Ascending aorta (tissue), 2 donors: ENCODE measurements at regions of chr7 and their contacts with region 1.

Region 1: GRCh38 chr7:143305423-143306070 is 10.4 kb upstream of the CLCN1 start:
- DNase-seq: no peak
- H3K4me3 ChIP-seq: no peak overlapping the region
- H3K27ac ChIP-seq: no peak overlapping the region
- H3K4me1 ChIP-seq: no peaks in the 10 kb centered on the region
- H3K27me3 ChIP-seq: no peaks in the 10 kb centered on the region
- CTCF ChIP-seq: peak; percentile 35 to 67 (median 60)

Region 2: DNA sequence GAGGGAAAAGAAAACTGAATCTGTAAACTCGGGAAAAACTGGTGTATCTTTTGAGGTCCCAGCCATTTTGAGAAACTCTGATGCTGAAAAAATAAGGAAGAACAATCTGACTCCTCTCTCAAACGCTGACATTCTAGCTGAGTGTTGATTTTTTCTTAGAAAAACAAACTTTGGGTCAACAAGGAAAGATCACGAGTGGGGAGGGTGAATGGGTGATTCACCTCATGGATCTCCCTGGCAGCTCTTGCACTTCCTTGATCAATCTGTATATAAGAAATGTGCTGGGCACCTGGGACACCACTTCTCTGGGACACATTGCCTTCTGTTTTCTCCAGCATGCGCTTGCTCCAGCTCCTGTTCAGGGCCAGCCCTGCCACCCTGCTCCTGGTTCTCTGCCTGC is 173.8 kb before region 1 on chr7 and contains the start of gene PIP:
- intact Hi-C with region 1: no loop called
- DNase-seq: no peak
- H3K4me3 ChIP-seq: no peak within 1 kb of the TSS
- H3K27ac ChIP-seq: no peak within 1 kb of the TSS
- H3K4me1 ChIP-seq: no peaks in the 10 kb centered on the region
- H3K27me3 ChIP-seq: no peaks in the 10 kb centered on the region
- CTCF ChIP-seq: no peak
- total RNA-seq, gene PIP: not detected

Region 3: DNA sequence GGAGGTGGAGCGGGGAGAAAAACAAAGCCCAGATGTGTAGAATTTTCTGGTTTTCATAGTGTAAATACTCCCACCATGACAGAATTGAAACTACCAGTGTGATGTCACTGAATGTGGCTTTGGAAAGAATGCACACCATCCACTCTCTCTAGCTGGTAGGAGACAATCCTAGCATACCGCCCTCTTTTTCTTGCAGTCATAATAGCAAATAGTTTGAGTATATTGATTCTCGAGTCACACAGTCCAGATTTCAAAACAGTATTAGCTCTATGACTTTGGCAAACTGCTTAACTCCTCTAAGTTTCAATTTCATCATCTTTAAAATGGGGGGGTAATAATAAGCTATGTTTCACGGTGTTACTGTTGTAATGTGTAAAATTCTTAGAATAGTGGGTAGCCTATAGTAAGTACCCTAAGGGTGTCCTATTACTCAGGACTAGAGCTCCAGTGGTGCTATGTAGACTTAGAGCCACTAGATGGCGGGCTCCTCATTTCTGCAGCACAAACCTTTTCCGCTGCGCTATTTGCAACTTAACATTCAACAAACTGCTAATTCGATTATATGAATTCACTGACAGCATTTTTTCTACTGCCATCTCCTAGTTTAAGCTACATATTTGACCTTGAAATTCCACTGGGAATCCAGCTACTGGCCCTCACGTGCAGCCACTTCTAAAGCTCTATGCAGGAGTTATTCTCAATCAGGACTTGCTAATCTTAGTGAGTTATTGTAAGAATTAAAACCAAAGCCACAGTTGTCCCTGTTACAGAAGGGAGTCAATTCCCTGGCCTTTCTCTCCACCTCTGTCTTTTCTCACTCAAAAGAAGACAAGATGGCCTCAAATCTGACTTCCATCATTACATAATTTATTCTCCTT is 65.0 kb before region 1 on chr7:
- intact Hi-C with region 1: loop called (anchors 2 kb)
- DNase-seq: peak in 1 of 2 donors; percentile 78
- H3K4me3 ChIP-seq: no peak overlapping the region
- H3K27ac ChIP-seq: no peak overlapping the region
- H3K4me1 ChIP-seq: no peaks in the 10 kb centered on the region
- H3K27me3 ChIP-seq: no peaks in the 10 kb centered on the region
- CTCF ChIP-seq: peak; percentile 60 to 91 (median 83)

Region 4: DNA sequence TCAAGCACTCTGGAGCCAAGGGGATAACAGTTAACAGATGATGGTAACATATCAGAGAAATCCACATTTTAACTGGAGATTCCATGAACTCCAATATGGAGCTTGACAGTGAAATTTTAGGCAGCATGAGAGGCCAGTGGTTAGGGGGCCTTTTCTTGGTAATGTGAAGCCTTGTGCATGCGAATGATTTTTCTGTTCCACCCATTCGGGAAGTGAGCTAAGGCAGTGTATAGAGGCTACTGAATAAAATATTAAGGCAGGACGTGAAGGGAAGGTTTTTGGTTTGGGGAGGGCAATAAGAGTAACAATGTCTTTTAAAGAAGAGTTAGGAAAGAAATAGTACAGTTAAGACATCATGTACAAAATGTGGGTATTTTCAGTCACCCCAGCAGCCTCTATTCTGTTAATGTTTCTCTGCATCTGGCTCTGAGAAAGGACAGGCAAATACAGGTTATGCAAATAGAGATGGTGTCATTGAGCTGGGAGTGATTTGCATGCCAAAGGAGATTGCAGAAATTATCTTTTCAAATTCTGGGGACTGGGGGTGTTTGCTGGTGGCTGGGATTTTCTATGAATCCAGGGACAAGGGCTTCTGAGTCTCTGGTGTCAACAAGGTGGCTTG is 130.9 kb after region 1 on chr7:
- intact Hi-C with region 1: no loop called
- DNase-seq: no peak
- H3K4me3 ChIP-seq: no peak overlapping the region
- H3K27ac ChIP-seq: no peak overlapping the region
- H3K4me1 ChIP-seq: no peaks in the 10 kb centered on the region
- H3K27me3 ChIP-seq: no peaks in the 10 kb centered on the region
- CTCF ChIP-seq: no peak